T-cell (primary cell): ENCODE measurements at regions of chr4 and their contacts with region 1.

Region 1: DNA sequence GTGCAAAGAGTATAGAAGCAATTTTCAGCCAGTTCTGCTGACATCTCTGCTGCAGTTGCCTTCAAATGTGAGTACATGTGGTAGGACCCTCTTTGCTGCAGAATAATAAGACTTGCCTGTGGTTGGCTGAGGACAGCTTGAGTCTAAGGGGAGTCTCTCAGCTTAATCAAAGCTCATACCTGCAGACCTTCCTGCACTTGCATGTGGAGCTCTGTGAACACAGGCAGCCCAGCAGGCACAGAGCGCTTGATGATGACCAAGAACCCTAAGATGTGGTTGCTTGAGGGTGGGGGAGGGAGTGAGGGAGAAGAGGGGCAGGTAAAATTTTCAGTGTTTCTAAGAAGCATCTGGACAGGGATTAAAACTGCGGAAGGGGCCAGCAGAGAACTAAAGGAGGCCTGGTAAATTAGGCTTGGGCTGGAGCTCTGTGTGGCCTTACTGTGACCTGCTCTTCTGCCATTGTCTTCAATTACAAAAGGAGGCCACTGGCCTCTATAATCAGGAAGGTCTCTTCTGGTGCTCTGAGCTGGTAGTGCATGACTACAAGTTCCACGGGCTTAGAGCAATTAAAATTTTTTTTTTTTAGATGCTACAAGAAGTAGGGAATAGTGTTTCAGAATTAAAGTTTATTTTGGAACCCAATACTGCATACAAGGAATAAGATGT is 59.9 kb upstream of the CHRNA9 start:
- DNase-seq: no peak
- ATAC-seq: peak in 3 of 4 experiments; percentile 43 to 53 (median 53)
- H3K4me3 ChIP-seq: peak overlapping the region in 1 of 2 donors; percentile 23
- H3K4me3 Mint-ChIP-seq: peak overlapping the region in 1 of 3 donors; percentile 47
- H3K27ac ChIP-seq: no peak overlapping the region
- H3K27ac Mint-ChIP-seq: peak overlapping the region in 1 of 2 donors; percentile 71
- H3K4me1 ChIP-seq: peaks cover 18 to 25% of the 10 kb centered on the region in 2 experiments
- H3K4me1 Mint-ChIP-seq: peaks cover 38 to 43% (median 42%) of the 10 kb centered on the region in 3 donors
- H3K27me3 ChIP-seq: no peaks in the 10 kb centered on the region
- H3K27me3 Mint-ChIP-seq: no peaks in the 10 kb centered on the region

Region 2: DNA sequence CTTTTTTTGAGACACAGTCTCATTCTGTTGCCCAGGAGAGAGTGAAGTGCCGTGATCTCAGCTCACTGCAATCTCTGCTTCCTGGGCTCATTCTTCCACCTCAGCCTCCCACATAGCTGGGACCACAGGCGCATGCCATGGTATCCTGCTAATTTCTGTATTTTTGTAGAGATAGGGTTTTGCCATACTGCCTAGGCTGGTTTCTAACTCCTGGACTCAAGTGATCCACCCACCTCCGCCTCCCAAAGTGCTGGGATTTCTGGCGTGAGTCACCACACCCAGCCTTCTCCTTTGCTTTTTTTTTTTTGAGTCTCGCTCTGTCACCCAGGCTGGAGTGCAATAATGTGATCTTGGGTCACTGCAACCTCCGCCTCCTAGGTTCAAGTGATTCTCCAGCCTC is 391.6 kb before region 1 on chr4:
- CTCF ChIA-PET with region 1: no interaction called
- POLR2A ChIA-PET with region 1: interaction called in 1 of 2 experiments, 11 read pairs
- DNase-seq: no peak
- ATAC-seq: no peak
- H3K4me3 ChIP-seq: no peak overlapping the region
- H3K4me3 Mint-ChIP-seq: no peak overlapping the region
- H3K27ac ChIP-seq: no peak overlapping the region
- H3K27ac Mint-ChIP-seq: no peak overlapping the region
- H3K4me1 ChIP-seq: no peaks in the 10 kb centered on the region
- H3K4me1 Mint-ChIP-seq: peaks cover 2 to 16% (median 6%) of the 10 kb centered on the region in 3 donors
- H3K27me3 ChIP-seq: no peaks in the 10 kb centered on the region
- H3K27me3 Mint-ChIP-seq: no peaks in the 10 kb centered on the region